ENCODE measurements at regions of chr7 and their contacts with region 1.

Region 1: DNA sequence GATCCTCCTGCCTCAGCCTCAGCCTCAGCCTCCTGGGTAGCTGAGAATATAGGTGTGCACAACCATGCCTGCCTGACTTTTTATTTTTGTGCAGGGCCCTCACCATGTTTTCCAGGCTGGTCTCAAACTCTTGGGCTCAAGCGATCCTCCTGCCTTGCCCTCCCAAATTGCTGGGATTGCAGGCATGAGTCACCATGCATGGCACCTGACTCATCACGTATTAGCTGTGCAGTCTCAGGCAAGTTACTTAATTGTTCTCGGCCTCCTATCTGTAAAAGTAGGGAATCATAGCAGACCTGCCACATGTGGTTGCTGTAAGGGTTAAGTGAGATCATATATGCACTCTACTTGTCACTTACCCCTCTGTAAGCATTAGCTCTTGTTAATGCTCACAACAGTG is 117.2 kb downstream of the ANLN start:
- DNase-seq: no peak
- ATAC-seq: no peak

Region 2: GRCh38 chr7:36456548-36456947 is 50.3 kb before region 1 on chr7:
- intact Hi-C with region 1: no loop called
- DNase-seq: no peak
- ATAC-seq: no peak

Region 3: GRCh38 chr7:36468370-36469101 is 38.3 kb before region 1 on chr7:
- intact Hi-C with region 1: no loop called
- DNase-seq: no peak
- ATAC-seq: no peak

Region 4: DNA sequence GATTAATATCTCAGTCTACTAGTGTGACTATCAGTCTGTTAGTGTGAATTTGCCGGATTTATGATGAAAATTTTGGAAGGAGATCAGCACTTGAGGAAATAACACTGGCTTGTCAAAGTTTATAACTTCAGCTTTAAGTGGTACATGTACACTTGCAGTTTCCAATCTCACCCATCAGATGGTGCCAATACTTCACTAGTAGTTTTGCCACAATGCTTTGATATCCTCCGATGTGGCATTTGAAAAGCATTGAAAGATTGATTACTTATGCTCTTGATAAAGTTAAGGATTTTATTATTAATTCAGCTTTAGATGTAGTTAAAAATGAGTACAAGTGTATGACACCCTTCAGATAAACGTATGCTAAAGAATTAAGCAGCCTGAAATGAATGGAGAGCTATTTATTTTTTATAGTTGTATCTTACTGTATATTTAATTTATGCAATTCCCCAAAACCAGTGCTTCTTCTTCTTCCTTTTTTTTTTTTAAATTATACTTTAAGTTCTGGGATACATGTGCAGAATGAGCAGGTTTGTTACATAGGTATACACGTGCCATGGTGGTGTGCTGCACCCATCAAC is 19.0 kb before region 1 on chr7:
- intact Hi-C with region 1: no loop called
- DNase-seq: no peak
- ATAC-seq: no peak

Region 5: DNA sequence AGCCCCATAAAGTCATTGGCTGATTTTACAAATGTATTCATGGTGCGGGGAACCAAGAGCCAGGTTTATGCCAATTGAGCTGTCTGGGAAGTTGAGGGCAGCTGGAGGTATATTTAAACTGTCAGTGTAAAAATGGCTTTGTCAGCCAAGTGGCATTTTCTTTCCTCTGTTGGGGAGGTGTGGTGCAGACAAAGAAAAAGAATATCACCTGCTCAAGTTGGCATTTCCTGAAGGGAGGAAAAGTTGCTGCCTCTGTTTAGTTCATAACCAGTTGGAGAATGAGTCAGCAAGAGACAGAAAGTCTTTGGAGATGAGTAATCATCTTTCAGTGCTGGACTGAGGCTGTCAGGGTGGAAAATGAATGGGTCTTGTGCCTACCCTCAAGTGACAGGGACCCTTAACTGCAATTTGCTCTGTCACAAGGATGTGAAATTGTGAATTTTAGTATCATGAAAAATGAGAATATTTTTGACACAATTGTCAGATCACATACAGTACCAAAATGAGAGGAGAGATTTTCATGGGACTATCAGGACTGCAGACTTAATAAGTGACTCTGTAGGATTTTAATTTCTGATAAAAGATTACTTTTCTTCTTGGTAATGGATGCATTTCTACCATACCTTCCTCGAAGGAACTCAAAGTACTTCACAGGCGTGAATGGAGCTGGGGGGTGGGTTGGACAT is 20.2 kb after region 1 on chr7:
- intact Hi-C with region 1: loop called (anchors 1 kb)
- DNase-seq: no peak
- ATAC-seq: no peak